Activated naive CD4-positive, alpha-beta T cell treated with anti-CD3 and anti-CD28 coated beads for 36 hours (primary cell): ENCODE measurements at regions of chrX and their contacts with region 1.

Region 1: GRCh38 chrX:57379296-57379695 is 92.8 kb downstream of the FAAH2 start:
- DNase-seq: peak; percentile 5
- H3K4me3 Mint-ChIP-seq: no peak overlapping the region
- H3K27ac Mint-ChIP-seq: peak overlapping the region; percentile 69
- H3K4me1 Mint-ChIP-seq: peaks cover 8% of the 10 kb centered on the region
- H3K27me3 Mint-ChIP-seq: no peaks in the 10 kb centered on the region

Region 2: DNA sequence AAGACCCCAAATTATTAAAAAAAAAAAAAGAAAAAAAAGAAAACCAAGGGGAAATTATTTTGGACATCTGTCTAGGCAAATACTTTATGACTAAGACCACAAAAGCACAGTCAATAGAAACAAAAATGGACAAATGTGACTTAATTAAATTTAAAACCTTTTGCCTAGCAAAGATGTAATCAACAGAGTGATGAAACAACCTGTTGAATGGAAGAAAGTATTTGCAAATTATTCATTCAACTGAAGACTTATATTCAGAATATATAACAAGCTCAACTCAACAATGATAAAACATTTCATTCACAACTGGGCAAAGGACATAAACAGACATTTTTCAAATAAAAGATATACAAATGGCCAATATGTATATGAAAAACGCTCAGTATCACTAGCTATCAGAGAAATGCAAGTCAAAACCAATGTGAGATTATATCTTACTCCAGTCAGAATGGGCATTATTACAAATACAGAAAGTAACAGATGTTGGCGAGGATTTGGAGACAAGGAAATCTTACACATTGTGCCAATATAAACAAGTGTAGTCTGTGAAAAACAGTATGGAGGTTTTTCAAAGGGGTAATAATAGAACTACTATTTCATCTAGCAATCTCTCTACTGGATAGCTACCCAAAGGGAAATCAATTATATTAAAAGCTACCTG is 25.7 kb before region 1 on chrX:
- CTCF ChIA-PET with region 1: no interaction called
- intact Hi-C with region 1: no loop called
- DNase-seq: no peak
- H3K4me3 Mint-ChIP-seq: no peak overlapping the region
- H3K27ac Mint-ChIP-seq: no peak overlapping the region
- H3K4me1 Mint-ChIP-seq: no peaks in the 10 kb centered on the region
- H3K27me3 Mint-ChIP-seq: no peaks in the 10 kb centered on the region

Region 3: DNA sequence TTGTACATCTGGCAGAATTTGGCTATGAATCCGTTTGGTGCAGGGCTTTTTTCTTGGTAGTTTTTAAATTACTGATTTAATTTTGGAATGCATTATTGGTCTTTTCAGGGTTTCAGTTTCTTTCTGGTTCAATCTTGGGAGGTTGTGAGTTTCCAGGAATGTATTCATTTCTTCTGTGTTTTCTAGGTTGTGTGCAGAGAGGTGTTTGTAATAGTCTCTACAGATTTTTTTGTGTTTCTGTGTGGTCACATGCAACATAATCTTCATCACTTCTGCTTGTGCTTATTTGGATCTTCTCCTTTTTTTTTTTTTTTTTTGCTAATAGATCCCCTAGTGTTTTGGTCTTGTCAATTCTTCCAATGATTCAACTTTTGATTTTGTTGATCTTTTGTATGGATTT is 15.2 kb before region 1 on chrX:
- CTCF ChIA-PET with region 1: no interaction called
- intact Hi-C with region 1: loop called (anchors 2 kb)
- DNase-seq: no peak
- H3K4me3 Mint-ChIP-seq: no peak overlapping the region
- H3K27ac Mint-ChIP-seq: no peak overlapping the region
- H3K4me1 Mint-ChIP-seq: peaks cover 7% of the 10 kb centered on the region
- H3K27me3 Mint-ChIP-seq: no peaks in the 10 kb centered on the region

Region 4: GRCh38 chrX:57677132-57677858 is 298.0 kb after region 1 on chrX:
- CTCF ChIA-PET with region 1: no interaction called
- intact Hi-C with region 1: no loop called
- DNase-seq: no peak
- H3K4me3 Mint-ChIP-seq: no peak overlapping the region
- H3K27ac Mint-ChIP-seq: no peak overlapping the region
- H3K4me1 Mint-ChIP-seq: no peaks in the 10 kb centered on the region
- H3K27me3 Mint-ChIP-seq: no peaks in the 10 kb centered on the region